Endothelial cell of umbilical vein (primary cell): ENCODE measurements at regions of chr20 and their contacts with region 1.

Region 1: GRCh38 chr20:57351042-57351783 is at the start of gene RAE1:
- DNase-seq: peak; percentile 93
- H3K4me3 ChIP-seq: peak within 1 kb of the TSS; percentile 64 to 79 (median 72)
- H3K27ac ChIP-seq: peak within 1 kb of the TSS; percentile 80
- H3K4me1 ChIP-seq: peaks cover 9% of the 10 kb centered on the region
- H3K27me3 ChIP-seq: no peaks in the 10 kb centered on the region
- CTCF ChIP-seq: no peak
- POLR2A ChIP-seq: peak; percentile 85
- total RNA-seq, gene RAE1: 34.1 and 37.1 TPM in 2 replicates

Region 2: DNA sequence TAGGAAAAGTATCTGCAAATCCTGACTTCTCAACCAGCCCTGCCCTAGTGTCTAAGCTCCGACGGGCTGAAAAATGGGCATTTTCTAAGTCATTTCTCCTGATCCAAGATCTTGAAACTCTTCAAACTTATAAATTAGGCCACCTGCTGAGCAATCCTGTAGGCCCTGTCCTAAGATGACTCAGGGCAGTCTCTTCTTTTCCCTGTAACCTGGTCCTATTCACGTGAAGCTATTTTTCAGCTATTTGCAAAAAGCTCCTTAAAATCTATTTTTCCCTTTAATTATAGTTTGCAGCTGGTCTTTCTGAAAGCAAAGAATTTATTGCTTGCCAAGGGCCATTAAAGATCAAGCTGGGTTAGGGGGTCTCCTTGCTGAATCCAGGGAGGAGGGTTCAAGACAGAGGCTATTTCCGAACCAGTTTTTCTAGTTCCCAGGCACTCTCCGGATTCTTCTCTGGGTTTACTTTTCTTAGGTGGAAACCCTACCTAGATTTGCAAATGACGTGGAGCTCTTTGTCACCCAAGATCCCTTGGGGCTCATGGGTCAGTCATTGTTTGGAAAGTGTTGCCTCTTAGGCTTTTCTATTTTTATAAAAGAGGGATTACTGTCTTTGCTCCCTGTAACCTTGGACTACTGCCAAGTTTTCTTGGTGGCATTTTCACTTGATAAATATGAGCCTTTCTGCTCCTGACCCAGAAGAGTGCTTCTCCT is 784.8 kb before region 1 on chr20:
- CTCF ChIA-PET with region 1: no interaction called
- POLR2A ChIA-PET with region 1: interaction called, 10 read pairs
- dilution Hi-C with region 1: no loop called
- intact Hi-C with region 1: no loop called
- DNase-seq: no peak
- H3K4me3 ChIP-seq: no peak overlapping the region
- H3K27ac ChIP-seq: no peak overlapping the region
- H3K4me1 ChIP-seq: no peaks in the 10 kb centered on the region
- H3K27me3 ChIP-seq: no peaks in the 10 kb centered on the region
- CTCF ChIP-seq: no peak
- POLR2A ChIP-seq: no peak

Region 3: GRCh38 chr20:57089691-57090150 is 261.5 kb before region 1 on chr20:
- CTCF ChIA-PET with region 1: interaction called, 31 read pairs
- POLR2A ChIA-PET with region 1: no interaction called
- dilution Hi-C with region 1: no loop called
- intact Hi-C with region 1: loop called (anchors 1 kb)
- DNase-seq: peak; percentile 7
- H3K4me3 ChIP-seq: no peak overlapping the region
- H3K27ac ChIP-seq: no peak overlapping the region
- H3K4me1 ChIP-seq: no peaks in the 10 kb centered on the region
- H3K27me3 ChIP-seq: no peaks in the 10 kb centered on the region
- CTCF ChIP-seq: peak; percentile 67 to 88
- POLR2A ChIP-seq: no peak

Region 4: DNA sequence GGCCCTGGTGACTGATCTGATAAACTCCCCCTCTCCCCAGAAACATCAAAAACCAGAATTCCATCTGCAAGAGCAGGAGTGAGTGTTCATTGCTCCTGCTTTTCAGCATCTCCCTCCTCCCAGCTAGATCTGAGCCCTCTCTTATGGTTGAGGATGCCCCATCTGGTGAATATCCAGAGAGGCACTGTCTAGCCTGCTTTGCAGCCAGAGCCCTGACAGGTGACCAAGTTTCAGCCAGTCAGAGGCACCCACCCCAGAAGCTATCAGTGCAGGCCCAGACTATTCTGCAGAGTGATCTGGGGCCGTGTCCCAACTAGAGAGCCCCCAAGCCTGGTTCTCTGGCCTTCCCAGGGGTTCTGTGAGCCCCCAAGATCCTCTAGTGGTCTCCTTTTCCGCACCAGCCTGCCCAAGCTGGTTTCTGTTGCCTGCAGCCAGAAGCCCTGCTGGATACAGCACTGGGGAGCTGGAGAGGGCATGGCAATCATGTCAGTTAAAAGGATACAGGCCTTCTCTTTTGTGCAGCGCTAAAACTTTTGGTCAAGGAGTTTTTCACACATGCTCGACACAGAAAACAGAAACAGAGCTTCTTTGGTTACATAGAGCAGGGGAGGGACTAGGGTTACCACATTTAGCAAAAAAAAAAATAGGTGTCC is 78.2 kb before region 1 on chr20:
- CTCF ChIA-PET with region 1: no interaction called
- POLR2A ChIA-PET with region 1: no interaction called
- dilution Hi-C with region 1: no loop called
- intact Hi-C with region 1: loop called (anchors 5 kb)
- DNase-seq: no peak
- H3K4me3 ChIP-seq: no peak overlapping the region
- H3K27ac ChIP-seq: no peak overlapping the region
- H3K4me1 ChIP-seq: no peaks in the 10 kb centered on the region
- H3K27me3 ChIP-seq: no peaks in the 10 kb centered on the region
- CTCF ChIP-seq: no peak
- POLR2A ChIP-seq: no peak

Region 5: GRCh38 chr20:57383447-57384347 is 32.5 kb after region 1 on chr20:
- CTCF ChIA-PET with region 1: interaction called, 4 read pairs
- POLR2A ChIA-PET with region 1: no interaction called
- dilution Hi-C with region 1: no loop called
- intact Hi-C with region 1: loop called (anchors 2 kb)
- DNase-seq: no peak
- H3K4me3 ChIP-seq: no peak overlapping the region
- H3K27ac ChIP-seq: no peak overlapping the region
- H3K4me1 ChIP-seq: no peaks in the 10 kb centered on the region
- H3K27me3 ChIP-seq: no peaks in the 10 kb centered on the region
- CTCF ChIP-seq: no peak
- POLR2A ChIP-seq: no peak

Region 6: DNA sequence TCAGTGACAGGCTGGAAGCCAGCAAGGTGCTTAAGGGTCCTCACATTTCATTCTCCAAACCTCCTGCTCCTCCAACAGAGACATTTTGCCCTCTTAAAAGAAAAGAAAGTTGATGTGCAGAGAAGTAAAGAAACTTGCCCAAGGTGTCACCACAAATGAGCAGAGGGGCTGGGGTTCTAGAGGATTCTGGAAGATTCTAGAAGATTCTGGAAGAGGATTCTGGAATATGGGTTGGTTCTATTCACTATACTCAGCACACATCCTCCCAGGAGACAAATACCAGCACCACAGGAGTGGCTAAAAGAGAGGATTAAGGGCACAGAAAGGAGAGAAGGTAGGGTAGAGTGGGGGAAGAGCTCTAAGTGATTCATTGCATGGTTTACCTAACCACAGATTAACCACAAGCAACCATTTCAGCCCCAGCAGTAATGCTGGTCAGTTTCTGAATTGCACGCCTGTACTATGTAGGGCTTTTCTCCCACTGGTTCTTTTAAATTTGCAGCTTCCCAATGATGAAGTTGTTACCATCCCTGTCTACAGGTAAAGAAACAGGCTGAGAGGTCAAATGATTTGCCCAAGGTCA is 551.2 kb after region 1 on chr20:
- CTCF ChIA-PET with region 1: no interaction called
- POLR2A ChIA-PET with region 1: no interaction called
- dilution Hi-C with region 1: no loop called
- intact Hi-C with region 1: no loop called
- DNase-seq: no peak
- H3K4me3 ChIP-seq: no peak overlapping the region
- H3K27ac ChIP-seq: no peak overlapping the region
- H3K4me1 ChIP-seq: no peaks in the 10 kb centered on the region
- H3K27me3 ChIP-seq: no peaks in the 10 kb centered on the region
- CTCF ChIP-seq: no peak
- POLR2A ChIP-seq: no peak